Activated CD4-positive, alpha-beta memory T cell treated with anti-CD3 and anti-CD28 coated beads, Interleukin-2, amount 10 ng/mL, durations not matched to agents 7 days and 5 days (primary cell): ENCODE measurements at regions of chr19 and their contacts with region 1.

Region 1: GRCh38 chr19:10095948-10096621 is 6.4 kb downstream of the ANGPTL6 start:
- DNase-seq: peak; percentile 92
- H3K4me3 Mint-ChIP-seq: peak overlapping the region; percentile 35
- H3K27ac Mint-ChIP-seq: peak overlapping the region; percentile 23
- H3K4me1 Mint-ChIP-seq: peaks cover 36% of the 10 kb centered on the region
- H3K27me3 Mint-ChIP-seq: no peaks in the 10 kb centered on the region

Region 2: GRCh38 chr19:9953802-9954542 is 142.1 kb before region 1 on chr19:
- CTCF ChIA-PET with region 1: no interaction called
- POLR2A ChIA-PET with region 1: no interaction called
- DNase-seq: no peak
- H3K4me3 Mint-ChIP-seq: no peak overlapping the region
- H3K27ac Mint-ChIP-seq: no peak overlapping the region
- H3K4me1 Mint-ChIP-seq: no peaks in the 10 kb centered on the region
- H3K27me3 Mint-ChIP-seq: no peaks in the 10 kb centered on the region

Region 3: DNA sequence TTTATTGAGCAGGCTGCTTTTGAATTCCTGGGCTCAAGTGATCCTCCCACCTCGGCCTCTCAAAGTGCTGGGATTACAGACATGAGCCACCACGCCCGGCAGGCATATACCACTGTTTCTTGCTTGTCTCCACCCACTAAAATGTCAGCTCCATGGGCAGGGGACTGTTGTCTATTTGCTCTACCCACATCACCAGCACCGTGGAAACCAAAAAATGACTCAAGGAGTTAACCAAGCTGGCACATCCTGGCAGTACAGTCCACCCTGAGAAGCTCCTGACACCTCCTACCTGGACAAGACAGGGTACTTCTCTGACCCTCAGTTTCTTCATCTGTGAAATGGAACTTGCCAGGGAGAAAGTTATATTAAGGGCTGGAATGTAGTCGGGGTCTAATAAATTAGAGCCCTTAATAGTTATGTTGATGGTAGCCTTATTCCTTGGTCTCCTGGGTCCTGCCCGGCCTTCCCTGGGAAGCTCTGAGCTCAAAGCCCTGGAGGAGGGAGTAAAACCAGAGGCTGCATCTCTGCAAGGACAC is 68.9 kb before region 1 on chr19:
- CTCF ChIA-PET with region 1: no interaction called
- POLR2A ChIA-PET with region 1: no interaction called
- DNase-seq: no peak
- H3K4me3 Mint-ChIP-seq: no peak overlapping the region
- H3K27ac Mint-ChIP-seq: no peak overlapping the region
- H3K4me1 Mint-ChIP-seq: no peaks in the 10 kb centered on the region
- H3K27me3 Mint-ChIP-seq: peaks cover 12% of the 10 kb centered on the region

Region 4: DNA sequence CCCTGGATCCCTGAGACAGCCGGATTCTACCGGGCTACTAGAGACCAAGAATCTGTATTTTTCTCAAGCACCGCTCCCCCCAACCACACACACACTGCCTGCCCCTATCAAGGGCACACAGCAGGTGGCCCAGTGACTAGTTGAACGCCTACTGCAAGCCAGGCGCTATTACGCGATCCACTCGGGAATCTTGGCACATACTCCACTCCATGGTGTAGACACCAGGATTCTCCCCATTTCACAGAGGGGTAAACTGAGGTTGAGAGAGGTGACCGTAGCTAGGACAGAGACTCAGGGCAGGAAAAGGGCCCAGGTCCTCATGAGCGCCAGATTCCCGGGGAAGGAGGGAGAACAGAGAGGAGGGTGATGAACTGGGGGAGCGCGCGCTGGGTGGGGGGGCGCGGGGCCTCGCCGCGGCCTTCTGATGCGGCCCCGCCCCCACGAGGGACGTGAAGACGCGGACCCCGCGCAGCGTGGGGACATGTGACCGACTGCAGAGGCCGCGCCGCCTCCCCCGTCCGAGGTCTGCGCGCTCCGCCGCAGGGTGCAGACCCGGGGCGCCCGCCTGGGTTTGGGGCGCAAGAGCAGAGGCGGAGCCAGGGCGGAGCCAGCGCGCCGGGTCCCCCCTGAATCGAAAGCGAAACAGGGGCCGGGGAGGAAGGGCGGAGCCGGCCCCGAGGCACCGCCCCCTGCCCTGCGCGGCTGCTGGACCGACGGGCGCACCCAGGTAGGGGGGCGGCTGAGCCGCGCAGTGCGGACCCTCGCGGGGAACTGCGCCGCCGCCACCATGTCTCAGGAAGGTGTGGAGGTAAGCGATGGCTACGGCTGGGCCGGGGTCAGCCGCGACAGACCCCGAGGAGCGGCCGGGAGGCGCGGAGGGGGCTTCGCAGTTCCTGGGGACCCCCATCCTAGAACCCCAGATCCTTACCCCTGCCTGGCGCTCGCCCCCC is 10.2 kb before region 1 on chr19 and contains the start of gene SHFL:
- CTCF ChIA-PET with region 1: interaction called, 4 read pairs
- POLR2A ChIA-PET with region 1: interaction called, 21 read pairs
- DNase-seq: peak; percentile 90
- H3K4me3 Mint-ChIP-seq: peak within 1 kb of the TSS; percentile 85
- H3K27ac Mint-ChIP-seq: peak within 1 kb of the TSS; percentile 74
- H3K4me1 Mint-ChIP-seq: peaks cover 19% of the 10 kb centered on the region
- H3K27me3 Mint-ChIP-seq: no peaks in the 10 kb centered on the region
- total RNA-seq, gene SHFL: 103 to 108 TPM

Region 5: GRCh38 chr19:10106100-10106936 is 10.2 kb after region 1 on chr19 and contains the start of gene PPAN:
- CTCF ChIA-PET with region 1: interaction called, 72 read pairs
- POLR2A ChIA-PET with region 1: interaction called, 52 read pairs
- DNase-seq: peak; percentile 98
- H3K4me3 Mint-ChIP-seq: peak within 1 kb of the TSS; percentile 88
- H3K27ac Mint-ChIP-seq: peak within 1 kb of the TSS; percentile 97
- H3K4me1 Mint-ChIP-seq: peaks cover 79% of the 10 kb centered on the region
- H3K27me3 Mint-ChIP-seq: no peaks in the 10 kb centered on the region
- total RNA-seq, gene PPAN: 74.3 to 75.6 TPM

Region 6: DNA sequence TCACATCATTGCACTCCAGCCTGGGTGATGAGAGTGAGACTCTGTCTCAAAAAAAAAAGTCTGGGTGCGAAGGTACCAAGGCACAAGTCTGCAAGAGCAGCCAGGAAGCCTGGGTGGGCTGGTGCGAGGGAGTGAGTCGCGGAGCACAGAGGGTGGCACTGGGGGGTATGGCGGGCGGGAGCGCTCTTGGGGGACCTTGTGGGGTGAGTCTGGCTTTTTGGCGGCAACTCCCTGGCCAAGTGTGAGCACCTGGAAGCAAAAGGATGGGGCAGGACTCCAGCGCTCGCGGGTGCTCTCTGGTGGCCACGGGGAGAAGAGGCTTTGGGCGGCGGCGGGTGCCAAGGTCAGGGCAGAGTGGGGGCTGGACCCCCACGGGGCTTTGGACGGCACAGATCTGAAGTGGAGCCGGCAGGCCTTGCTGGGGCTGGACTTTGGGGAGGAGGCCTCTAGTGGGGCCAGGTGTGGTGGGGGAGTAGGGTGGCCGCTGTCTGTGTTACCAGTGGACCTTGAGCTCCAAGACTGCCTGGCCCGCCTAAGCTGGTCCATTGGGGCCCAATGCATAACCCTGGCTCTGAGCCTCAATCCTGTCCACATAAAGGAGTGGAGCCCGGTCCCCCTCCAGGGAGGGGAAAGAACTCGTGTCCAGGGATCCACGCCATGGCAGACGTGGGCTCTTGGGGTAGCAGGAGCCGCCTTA is 17.0 kb after region 1 on chr19:
- CTCF ChIA-PET with region 1: interaction called, 72 read pairs
- POLR2A ChIA-PET with region 1: interaction called, 52 read pairs
- DNase-seq: peak; percentile 74
- H3K4me3 Mint-ChIP-seq: peak overlapping the region; percentile 70
- H3K27ac Mint-ChIP-seq: peak overlapping the region; percentile 95
- H3K4me1 Mint-ChIP-seq: peaks cover 64% of the 10 kb centered on the region
- H3K27me3 Mint-ChIP-seq: no peaks in the 10 kb centered on the region

Region 7: GRCh38 chr19:10118960-10119359 is 22.9 kb after region 1 on chr19:
- CTCF ChIA-PET with region 1: interaction called, 72 read pairs
- POLR2A ChIA-PET with region 1: interaction called, 52 read pairs
- DNase-seq: no peak
- H3K4me3 Mint-ChIP-seq: peak overlapping the region; percentile 94
- H3K27ac Mint-ChIP-seq: peak overlapping the region; percentile 85
- H3K4me1 Mint-ChIP-seq: peaks cover 27% of the 10 kb centered on the region
- H3K27me3 Mint-ChIP-seq: no peaks in the 10 kb centered on the region